MCF 10A (cell line): ENCODE measurements at regions of chr18 and their contacts with region 1.

Region 1: GRCh38 chr18:80179857-80180551 is 67.3 kb downstream of the PARD6G start:
- DNase-seq: peak; percentile 44
- H3K4me3 Mint-ChIP-seq: peak overlapping the region; percentile 6
- H3K27ac Mint-ChIP-seq: no peak overlapping the region
- H3K4me1 Mint-ChIP-seq: peaks cover 22% of the 10 kb centered on the region
- H3K27me3 Mint-ChIP-seq: no peaks in the 10 kb centered on the region
- CTCF ChIP-seq: no peak

Region 2: GRCh38 chr18:79740521-79741361 is 439.3 kb before region 1 on chr18:
- CTCF ChIA-PET with region 1: no interaction called
- POLR2A ChIA-PET with region 1: no interaction called
- intact Hi-C with region 1: no loop called
- DNase-seq: no peak
- H3K4me3 Mint-ChIP-seq: no peak overlapping the region
- H3K27ac Mint-ChIP-seq: peak overlapping the region; percentile 23
- H3K4me1 Mint-ChIP-seq: no peaks in the 10 kb centered on the region
- H3K27me3 Mint-ChIP-seq: no peaks in the 10 kb centered on the region
- CTCF ChIP-seq: no peak

Region 3: DNA sequence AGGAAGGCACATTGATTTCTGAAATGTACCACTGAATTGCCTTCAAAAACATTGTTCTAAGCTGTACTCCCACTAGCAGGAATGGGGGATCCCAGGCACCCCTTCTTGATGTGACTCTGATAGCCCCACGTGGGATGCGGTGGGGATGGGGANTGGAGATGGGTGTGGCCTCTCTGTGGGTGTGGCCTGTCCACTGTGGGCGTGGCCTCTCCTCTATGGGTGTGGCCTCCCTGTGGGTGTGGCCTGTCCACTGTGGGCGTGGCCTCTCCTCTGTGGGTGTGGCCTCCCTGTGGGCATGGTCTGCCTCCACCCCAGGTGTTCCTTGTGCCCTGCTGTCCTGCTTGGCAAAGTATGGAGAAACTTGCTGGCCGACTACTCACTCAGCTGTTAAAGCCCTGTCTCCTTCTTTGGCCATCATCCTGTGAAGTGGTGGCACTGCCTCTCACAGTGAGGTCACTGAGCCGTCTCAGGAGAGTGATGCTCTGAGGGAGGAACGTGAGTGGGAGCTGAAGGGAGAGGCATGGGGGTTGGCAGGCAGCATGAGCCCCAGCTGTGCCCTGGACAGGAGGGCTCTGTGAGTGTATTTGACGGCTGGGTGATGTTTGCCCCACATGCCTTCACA is 74.0 kb after region 1 on chr18:
- CTCF ChIA-PET with region 1: interaction called, 10 read pairs
- POLR2A ChIA-PET with region 1: interaction called, 11 read pairs
- intact Hi-C with region 1: no loop called
- DNase-seq: peak; percentile 35
- H3K4me3 Mint-ChIP-seq: no peak overlapping the region
- H3K27ac Mint-ChIP-seq: no peak overlapping the region
- H3K4me1 Mint-ChIP-seq: peaks cover 27% of the 10 kb centered on the region
- H3K27me3 Mint-ChIP-seq: no peaks in the 10 kb centered on the region
- CTCF ChIP-seq: no peak